ENCODE measurements at regions of chr16 and their contacts with region 1.

Region 1: GRCh38 chr16:82603784-82604411 is 22.9 kb upstream of the CDH13 start:
- DNase-seq: peak; percentile 47
- ATAC-seq: peak; percentile 77
- H3K4me3 ChIP-seq: no peak overlapping the region
- H3K27ac ChIP-seq: no peak overlapping the region
- H3K4me1 ChIP-seq: no peaks in the 10 kb centered on the region
- H3K27me3 ChIP-seq: 0 out of 2 replicates have a peak, but pooled peaks cover 9% of the 10 kb centered on the region
- CTCF ChIP-seq: peak; percentile 52

Region 2: GRCh38 chr16:82585675-82586074 is 18.2 kb before region 1 on chr16:
- CTCF ChIA-PET with region 1: no interaction called
- POLR2A ChIA-PET with region 1: no interaction called
- intact Hi-C with region 1: no loop called
- DNase-seq: no peak
- ATAC-seq: no peak
- H3K4me3 ChIP-seq: no peak overlapping the region
- H3K27ac ChIP-seq: no peak overlapping the region
- H3K4me1 ChIP-seq: no peaks in the 10 kb centered on the region
- H3K27me3 ChIP-seq: peaks cover 50% of the 10 kb centered on the region
- CTCF ChIP-seq: no peak

Region 3: GRCh38 chr16:82639666-82640336 is 35.9 kb after region 1 on chr16:
- CTCF ChIA-PET with region 1: no interaction called
- POLR2A ChIA-PET with region 1: no interaction called
- intact Hi-C with region 1: loop called (anchors 5 kb)
- DNase-seq: peak; percentile 73
- ATAC-seq: peak; percentile 87
- H3K4me3 ChIP-seq: no peak overlapping the region
- H3K27ac ChIP-seq: peak overlapping the region; percentile 16; the same call in 1 of the 2 replicates
- H3K4me1 ChIP-seq: peaks cover 23% of the 10 kb centered on the region
- H3K27me3 ChIP-seq: no peaks in the 10 kb centered on the region
- CTCF ChIP-seq: peak; percentile 83